Activated T-helper 2 cell treated with anti-CD3 and anti-CD28 coated beads, Interferon-gamma antibody, Interleukin-2, Interleukin-4, amounts not matched to agents 10 μg/mL and 5 μg/mL and 100 μg/mL, durations not matched to agents 14 hours and 24 hours and 36 hours (primary cell): ENCODE measurements at regions of chr3 and their contacts with region 1.

Region 1: DNA sequence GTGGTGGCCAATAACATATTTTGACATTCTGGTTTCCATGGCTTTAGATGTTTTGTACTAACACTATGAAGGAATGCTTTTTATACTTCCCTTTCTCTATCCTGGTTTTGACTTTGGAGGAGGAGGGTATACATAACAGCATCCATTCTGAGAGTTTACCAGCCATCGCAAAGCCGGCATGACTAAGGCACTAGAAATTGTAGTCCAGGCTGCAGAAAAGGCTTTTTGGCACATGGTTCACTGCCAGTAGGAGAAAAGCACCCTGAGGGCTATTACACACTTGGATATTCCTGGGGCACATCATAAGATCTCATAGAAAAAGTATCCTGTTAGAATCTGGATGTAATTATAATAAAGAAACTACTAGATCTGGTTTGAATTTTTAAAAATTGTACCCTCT is 101.8 kb downstream of the STT3B start:
- DNase-seq: no peak
- H3K4me3 Mint-ChIP-seq: no peak overlapping the region
- H3K27ac Mint-ChIP-seq: peak overlapping the region; percentile 38
- H3K4me1 Mint-ChIP-seq: peaks cover 36% of the 10 kb centered on the region
- H3K27me3 Mint-ChIP-seq: no peaks in the 10 kb centered on the region

Region 2: DNA sequence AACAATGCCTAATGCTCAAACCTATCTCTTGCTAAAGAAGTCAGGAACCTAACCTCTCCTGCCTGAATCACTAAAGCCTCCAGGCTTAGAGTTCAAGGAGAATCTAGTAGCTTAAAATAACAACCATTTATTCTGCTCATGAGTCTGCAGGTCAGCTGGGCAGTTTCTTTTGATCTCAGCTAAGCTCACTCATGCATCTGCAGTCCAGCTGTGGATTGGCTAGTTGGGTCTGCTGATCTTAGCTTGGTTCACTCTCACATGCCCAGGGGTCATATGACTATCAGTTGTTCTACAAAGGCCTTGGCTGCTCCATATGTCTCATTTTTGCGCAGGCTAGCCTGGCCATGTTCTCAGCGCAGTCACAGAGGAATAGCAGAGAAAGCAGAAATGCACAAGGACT is 211.0 kb before region 1 on chr3:
- intact Hi-C with region 1: no loop called
- DNase-seq: no peak
- H3K4me3 Mint-ChIP-seq: no peak overlapping the region
- H3K27ac Mint-ChIP-seq: no peak overlapping the region
- H3K4me1 Mint-ChIP-seq: peaks cover 5% of the 10 kb centered on the region
- H3K27me3 Mint-ChIP-seq: peaks cover 7% of the 10 kb centered on the region

Region 3: GRCh38 chr3:31567036-31567435 is 67.4 kb before region 1 on chr3:
- intact Hi-C with region 1: loop called (anchors 5 kb)
- DNase-seq: no peak
- H3K4me3 Mint-ChIP-seq: no peak overlapping the region
- H3K27ac Mint-ChIP-seq: no peak overlapping the region
- H3K4me1 Mint-ChIP-seq: peaks cover 60% of the 10 kb centered on the region
- H3K27me3 Mint-ChIP-seq: no peaks in the 10 kb centered on the region

Region 4: DNA sequence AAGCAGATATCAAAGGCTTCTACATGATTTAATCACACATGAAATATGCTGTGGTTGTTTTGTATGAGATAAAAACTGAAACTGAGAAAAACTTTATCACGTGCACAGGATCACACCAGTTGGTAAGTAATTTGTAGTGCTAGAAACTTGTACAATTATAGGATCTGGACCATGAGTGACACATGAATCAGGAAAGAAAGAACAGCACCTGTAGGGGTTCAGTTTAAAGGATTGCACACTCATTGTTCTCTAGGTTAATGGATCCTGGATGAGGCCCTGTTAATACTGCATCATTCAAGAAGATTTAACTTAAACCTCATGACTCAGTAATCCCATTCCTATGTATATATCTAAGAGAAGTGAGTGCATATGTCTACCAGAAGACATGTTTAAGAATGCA is 13.8 kb before region 1 on chr3:
- intact Hi-C with region 1: loop called (anchors 2 kb)
- DNase-seq: no peak
- H3K4me3 Mint-ChIP-seq: no peak overlapping the region
- H3K27ac Mint-ChIP-seq: peak overlapping the region; percentile 21
- H3K4me1 Mint-ChIP-seq: peaks cover 22% of the 10 kb centered on the region
- H3K27me3 Mint-ChIP-seq: no peaks in the 10 kb centered on the region

Region 5: DNA sequence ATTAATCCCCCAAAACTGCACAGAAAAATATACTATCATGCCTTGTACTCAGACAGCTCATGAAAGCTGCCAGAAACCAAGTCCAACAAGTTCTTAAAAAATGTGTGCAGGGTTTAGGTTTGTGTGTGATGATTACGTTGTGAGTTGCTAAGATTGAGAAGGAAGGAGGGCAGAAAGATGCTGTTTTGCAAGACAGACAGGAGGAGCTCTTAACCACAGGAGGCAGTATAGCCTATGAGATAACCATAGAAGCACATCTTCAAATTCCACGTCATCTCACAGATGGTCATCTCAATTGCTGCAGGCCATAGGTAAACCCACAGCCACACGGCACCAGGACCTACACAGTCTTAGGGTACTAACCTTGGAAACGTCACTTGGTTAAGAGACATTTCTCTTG is 90.2 kb after region 1 on chr3:
- intact Hi-C with region 1: no loop called
- DNase-seq: no peak
- H3K4me3 Mint-ChIP-seq: no peak overlapping the region
- H3K27ac Mint-ChIP-seq: no peak overlapping the region
- H3K4me1 Mint-ChIP-seq: no peaks in the 10 kb centered on the region
- H3K27me3 Mint-ChIP-seq: peaks cover 10% of the 10 kb centered on the region

Region 6: GRCh38 chr3:31839144-31839917 is 204.8 kb after region 1 on chr3:
- intact Hi-C with region 1: no loop called
- DNase-seq: no peak
- H3K4me3 Mint-ChIP-seq: no peak overlapping the region
- H3K27ac Mint-ChIP-seq: no peak overlapping the region
- H3K4me1 Mint-ChIP-seq: no peaks in the 10 kb centered on the region
- H3K27me3 Mint-ChIP-seq: peaks cover 3% of the 10 kb centered on the region

Region 7: DNA sequence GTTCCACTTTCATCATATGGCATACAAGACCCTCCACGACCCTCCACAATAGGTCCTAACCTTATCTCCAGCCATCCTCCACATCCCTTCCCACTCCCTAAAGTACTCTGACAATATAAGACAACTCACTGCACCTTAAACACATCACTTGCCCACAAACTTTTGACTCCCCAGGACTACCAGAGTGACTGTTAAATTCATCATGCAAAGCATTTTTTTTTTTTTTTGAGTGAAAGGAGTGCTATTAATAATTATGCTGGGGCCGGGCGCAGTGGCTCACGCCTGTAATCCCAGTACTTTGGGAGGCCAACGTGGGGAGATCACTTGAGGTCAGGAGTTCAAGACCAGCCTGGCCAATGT is 290.8 kb after region 1 on chr3:
- intact Hi-C with region 1: loop called (anchors 5 kb)
- DNase-seq: no peak
- H3K4me3 Mint-ChIP-seq: no peak overlapping the region
- H3K27ac Mint-ChIP-seq: peak overlapping the region; percentile 65
- H3K4me1 Mint-ChIP-seq: peaks cover 38% of the 10 kb centered on the region
- H3K27me3 Mint-ChIP-seq: no peaks in the 10 kb centered on the region